AG04450 (cell line): ENCODE measurements at regions of chr5 and their contacts with region 1.

Region 1: GRCh38 chr5:126354012-126354857 is 69.0 kb upstream of the GRAMD2B start:
- DNase-seq: peak; percentile 88
- H3K4me3 ChIP-seq: peak overlapping the region; percentile 44
- H3K27ac ChIP-seq: peak overlapping the region; percentile 57
- H3K27me3 ChIP-seq: no peaks in the 10 kb centered on the region
- CTCF ChIP-seq: peak; percentile 46

Region 2: DNA sequence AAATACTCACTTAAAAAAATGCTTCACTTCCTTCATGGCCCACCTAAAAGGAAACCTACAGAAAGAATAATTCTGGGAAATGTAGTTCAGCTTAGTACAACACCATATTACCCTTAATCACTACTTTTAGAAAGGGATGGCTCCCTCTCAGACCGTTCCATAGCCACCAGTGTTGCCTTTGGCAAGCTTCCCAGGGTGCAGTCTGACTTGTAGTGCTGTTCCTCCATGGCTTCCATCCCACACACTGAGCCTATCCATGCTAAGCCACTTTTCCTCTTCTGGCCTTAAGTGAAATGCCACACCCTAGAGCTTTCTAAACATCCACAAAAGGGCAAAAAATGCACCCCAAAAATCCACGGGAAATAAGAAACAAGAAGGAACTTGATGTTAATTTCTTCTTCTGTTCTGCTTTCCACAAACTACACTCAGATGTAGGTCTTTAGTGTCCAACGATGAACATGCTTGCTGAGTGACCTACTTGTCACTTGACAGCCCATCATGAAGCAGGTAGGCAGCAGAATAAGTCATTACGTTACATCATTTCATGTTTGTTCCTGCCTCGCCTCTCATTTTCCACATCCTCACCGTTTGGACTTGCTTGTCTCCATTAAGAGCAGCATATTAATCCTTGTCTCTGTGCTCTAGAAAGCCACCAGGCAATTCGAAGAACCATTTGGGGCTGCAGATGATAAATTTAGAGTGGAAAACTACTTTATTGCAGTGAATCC is 322.1 kb before region 1 on chr5:
- CTCF ChIA-PET with region 1: no interaction called
- POLR2A ChIA-PET with region 1: no interaction called
- DNase-seq: no peak
- H3K4me3 ChIP-seq: no peak overlapping the region
- H3K27ac ChIP-seq: no peak overlapping the region
- H3K27me3 ChIP-seq: no peaks in the 10 kb centered on the region
- CTCF ChIP-seq: no peak

Region 3: GRCh38 chr5:126544087-126544740 is 190.0 kb after region 1 on chr5:
- CTCF ChIA-PET with region 1: interaction called, 270 read pairs
- POLR2A ChIA-PET with region 1: interaction called, 4 read pairs
- DNase-seq: no peak
- H3K4me3 ChIP-seq: no peak overlapping the region
- H3K27ac ChIP-seq: no peak overlapping the region
- H3K27me3 ChIP-seq: no peaks in the 10 kb centered on the region
- CTCF ChIP-seq: peak; percentile 60

Region 4: DNA sequence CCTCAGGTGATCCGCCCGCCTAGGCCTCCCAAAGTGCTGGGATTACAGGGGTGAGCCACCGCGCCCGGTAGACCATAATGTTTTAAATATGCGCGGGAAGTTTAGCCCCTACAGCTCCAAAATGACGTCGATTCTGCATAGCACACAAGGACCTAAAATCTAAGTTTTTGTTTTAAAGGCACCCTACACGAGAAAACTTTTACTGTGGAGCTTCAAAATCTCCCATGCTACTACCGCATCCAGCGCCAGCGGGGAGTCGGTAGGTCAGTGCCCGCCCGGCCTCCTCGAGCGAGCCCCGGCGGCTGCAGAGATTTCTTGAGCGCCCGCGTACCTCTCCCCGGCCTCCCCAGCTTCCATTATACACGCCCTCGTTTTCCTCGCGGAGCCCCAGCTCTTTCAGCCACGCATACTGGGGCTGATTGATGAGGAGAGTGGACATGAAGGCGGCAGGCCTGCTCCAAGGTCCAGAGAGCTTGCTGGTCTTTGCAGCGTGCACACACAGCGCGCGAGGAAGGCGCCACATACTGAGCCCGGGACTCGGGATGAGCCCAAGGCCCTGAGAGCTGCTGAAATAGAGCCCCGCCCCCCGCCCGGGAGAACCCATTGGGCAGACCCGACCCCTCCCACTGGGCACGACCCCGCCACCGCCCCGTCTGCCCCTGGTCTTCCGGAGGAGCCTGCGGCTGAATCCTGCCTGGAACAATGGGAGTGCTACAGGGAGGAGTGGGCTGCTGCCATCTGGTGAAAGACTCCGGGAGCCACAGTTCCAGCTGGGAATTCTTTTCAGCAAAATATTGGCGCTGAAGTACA is 240.6 kb after region 1 on chr5 and contains the start of gene ALDH7A1:
- CTCF ChIA-PET with region 1: interaction called, 13 read pairs
- POLR2A ChIA-PET with region 1: no interaction called
- DNase-seq: peak; percentile 70
- H3K4me3 ChIP-seq: peak within 1 kb of the TSS; percentile 73
- H3K27ac ChIP-seq: peak within 1 kb of the TSS; percentile 87
- H3K27me3 ChIP-seq: no peaks in the 10 kb centered on the region
- CTCF ChIP-seq: peak; percentile 62
- polyA plus RNA-seq, gene ALDH7A1: 82.2 and 97.2 TPM in 2 replicates

Region 5: DNA sequence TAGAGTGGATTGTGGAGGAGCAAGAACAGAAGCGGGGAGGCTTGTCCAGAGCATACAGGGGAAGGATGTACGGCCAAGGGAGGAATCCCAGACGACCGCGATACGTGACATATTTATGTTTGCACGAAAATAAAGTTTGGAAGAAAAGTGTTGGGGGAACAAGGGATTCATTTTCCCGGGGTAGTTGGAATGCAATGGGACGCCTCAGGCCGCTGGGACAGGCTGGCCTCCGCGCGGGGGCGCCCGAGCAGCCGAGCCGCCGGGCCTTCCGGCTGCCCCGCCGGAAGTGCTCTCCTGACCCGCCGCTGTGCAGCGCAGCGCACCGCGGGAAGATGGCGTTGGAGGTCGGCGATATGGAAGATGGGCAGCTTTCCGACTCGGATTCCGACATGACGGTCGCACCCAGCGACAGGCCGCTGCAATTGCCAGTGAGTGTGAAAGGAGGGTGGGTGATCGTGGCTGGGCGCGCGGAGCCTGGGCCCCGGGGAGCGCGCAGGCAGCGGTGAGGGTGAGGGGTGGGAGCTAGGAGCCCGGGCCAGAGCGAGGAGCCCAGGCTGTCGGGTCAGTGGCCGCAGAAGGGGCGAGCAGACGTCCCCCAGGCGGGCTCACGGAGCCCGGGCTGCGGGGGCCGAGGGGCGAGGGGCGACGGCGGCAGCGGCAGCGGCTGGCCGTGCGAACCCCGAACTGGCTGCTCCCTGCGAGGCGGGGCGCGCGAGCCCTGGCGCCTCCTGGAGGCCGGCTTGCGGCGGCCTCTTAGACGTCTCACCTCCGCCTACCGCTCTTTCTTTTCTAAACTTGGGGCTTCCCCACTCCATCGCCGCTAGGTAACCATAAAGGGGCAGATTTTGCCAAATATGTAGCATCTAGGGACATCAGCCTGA is 246.6 kb after region 1 on chr5 and contains the start of gene PHAX:
- CTCF ChIA-PET with region 1: interaction called, 14 read pairs
- POLR2A ChIA-PET with region 1: no interaction called
- DNase-seq: peak; percentile 37
- H3K4me3 ChIP-seq: peak within 1 kb of the TSS; percentile 95
- H3K27ac ChIP-seq: peak within 1 kb of the TSS; percentile 57
- H3K27me3 ChIP-seq: no peaks in the 10 kb centered on the region
- CTCF ChIP-seq: peak; percentile 80
- polyA plus RNA-seq, gene PHAX: 38.9 and 61.0 TPM in 2 replicates

Region 6: GRCh38 chr5:127072861-127073846 is 718.9 kb after region 1 on chr5 and contains the start of gene C5orf63:
- CTCF ChIA-PET with region 1: no interaction called
- POLR2A ChIA-PET with region 1: no interaction called
- DNase-seq: no peak
- H3K4me3 ChIP-seq: peak within 1 kb of the TSS; percentile 65
- H3K27ac ChIP-seq: no peak within 1 kb of the TSS
- H3K27me3 ChIP-seq: no peaks in the 10 kb centered on the region
- CTCF ChIP-seq: peak; percentile 18; the same call in 1 of the 2 replicates
- polyA plus RNA-seq, gene C5orf63: 2.9 and 3.2 TPM in 2 replicates